Panc1 (cell line): ENCODE measurements at regions of chr19 and their contacts with region 1.

Region 1: DNA sequence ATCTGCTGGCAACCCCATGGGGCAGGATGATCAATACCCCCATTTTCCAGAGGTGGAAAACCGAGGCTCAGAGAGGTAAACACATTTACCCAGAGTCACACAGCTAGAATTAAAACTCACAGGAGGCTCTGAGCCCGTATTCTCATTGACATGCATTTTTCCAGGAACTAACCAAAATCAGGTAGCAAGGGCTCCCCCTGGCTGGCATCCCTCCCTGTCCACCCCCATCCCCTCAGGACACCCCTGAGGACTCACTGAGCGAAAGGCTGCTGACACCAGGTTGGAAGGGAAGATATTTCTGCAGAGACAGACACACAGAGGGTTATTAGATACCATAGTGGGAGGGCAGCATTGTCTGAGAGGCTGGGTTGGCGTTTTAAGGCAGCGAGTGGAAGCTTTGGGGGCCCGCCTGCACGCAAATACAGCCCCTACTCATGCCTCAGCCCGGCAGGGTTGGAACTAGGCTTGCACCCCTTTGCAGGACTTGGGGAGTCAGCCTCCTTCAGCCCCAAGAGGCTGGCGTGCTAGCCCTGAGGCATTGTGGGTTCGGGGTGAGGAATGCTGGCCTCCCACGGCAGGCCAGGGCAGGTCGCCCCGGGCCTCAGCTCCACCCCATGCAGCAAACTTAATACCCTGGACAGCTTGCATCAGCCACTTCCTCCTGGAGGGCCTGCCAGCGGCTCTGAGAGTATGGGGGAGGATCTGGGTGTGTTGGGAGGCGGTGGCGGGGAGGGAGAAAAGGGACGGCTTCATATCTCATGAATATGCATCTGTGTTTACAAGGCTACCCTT is 3.9 kb downstream of the SLC1A5 start:
- DNase-seq: no peak
- ATAC-seq: peak; percentile 57
- H3K4me3 ChIP-seq: peak overlapping the region; percentile 87 to 92
- H3K27ac ChIP-seq: peak overlapping the region; percentile 89
- H3K4me1 ChIP-seq: peaks cover 8% of the 10 kb centered on the region
- H3K27me3 ChIP-seq: no peaks in the 10 kb centered on the region
- CTCF ChIP-seq: no peak; the same call in 1 of the 2 replicates

Region 2: GRCh38 chr19:46670813-46671212 is 113.6 kb before region 1 on chr19:
- CTCF ChIA-PET with region 1: no interaction called
- POLR2A ChIA-PET with region 1: no interaction called
- in situ Hi-C with region 1: no loop called
- intact Hi-C with region 1: no loop called
- DNase-seq: no peak
- ATAC-seq: no peak
- H3K4me3 ChIP-seq: no peak overlapping the region
- H3K27ac ChIP-seq: no peak overlapping the region
- H3K4me1 ChIP-seq: no peaks in the 10 kb centered on the region
- H3K27me3 ChIP-seq: no peaks in the 10 kb centered on the region
- CTCF ChIP-seq: no peak

Region 3: DNA sequence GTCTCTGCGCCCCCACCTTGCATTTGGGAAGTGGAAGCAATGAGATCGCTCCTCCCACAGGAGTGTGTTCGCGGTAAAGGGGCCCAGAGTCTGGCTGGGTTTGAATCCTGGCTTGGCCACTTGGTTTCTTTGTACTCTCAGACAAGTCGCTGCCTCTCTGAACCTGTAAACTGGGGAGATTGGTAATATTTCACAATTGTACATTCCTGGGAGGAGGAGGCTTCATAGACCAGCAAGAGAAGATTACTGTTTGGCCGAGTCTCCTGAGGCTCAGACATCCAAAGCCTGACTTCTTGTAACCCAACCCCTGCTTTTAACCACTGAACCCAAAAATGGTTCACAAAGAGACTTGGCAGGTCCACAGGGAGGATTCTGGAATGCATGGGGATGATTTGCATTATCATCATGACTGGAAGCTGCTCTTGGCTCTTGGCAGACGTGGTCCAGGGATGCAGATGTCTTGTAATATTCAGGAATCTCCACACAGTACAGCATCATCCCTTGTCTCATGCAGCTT is 24.6 kb before region 1 on chr19:
- CTCF ChIA-PET with region 1: no interaction called
- POLR2A ChIA-PET with region 1: interaction called, 12 read pairs
- in situ Hi-C with region 1: no loop called
- intact Hi-C with region 1: no loop called
- DNase-seq: no peak
- ATAC-seq: no peak
- H3K4me3 ChIP-seq: no peak overlapping the region
- H3K27ac ChIP-seq: no peak overlapping the region
- H3K4me1 ChIP-seq: no peaks in the 10 kb centered on the region
- H3K27me3 ChIP-seq: no peaks in the 10 kb centered on the region
- CTCF ChIP-seq: no peak